IMR-90 (cell line): ENCODE measurements at regions of chr9 and their contacts with region 1.

Region 1: DNA sequence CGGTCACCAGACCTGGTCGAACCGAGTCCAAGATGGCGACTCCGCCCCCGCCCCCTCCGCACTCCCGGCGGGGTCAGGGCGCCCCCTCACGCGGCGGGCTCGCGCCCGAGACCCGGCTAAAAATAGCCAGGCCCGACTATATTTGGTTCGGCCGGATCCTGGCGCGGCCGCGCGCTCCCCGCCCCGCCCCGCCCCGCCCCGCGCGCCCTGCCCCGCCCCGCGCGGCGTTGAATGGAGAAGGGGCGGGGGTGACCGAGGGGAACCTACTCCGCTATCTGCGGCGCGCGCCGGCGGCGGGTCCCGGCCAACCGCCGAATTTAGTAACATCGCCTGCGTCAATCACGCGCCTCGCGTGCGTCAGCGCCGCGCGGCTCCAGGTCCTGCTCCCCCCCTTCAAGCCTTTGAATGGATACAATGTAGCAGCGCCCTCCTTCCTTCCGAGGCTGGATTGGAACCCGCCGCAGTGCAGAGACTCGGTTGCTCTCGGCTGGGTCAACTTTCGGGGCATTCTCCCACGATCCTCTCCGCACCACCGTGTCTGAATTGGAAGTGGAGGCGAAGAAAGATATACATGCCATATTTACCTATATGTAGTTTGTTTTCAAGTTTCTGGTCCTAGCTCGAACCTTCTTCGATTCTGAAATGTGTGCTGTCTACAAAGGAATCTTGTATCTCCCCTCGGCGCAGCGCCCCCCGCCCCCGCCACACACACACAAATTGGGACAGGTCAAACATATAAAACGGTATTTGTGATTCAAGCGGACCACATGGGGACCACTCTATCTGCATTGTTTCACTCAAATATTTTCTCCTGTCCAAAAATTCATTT is 1.6 kb upstream of the NR4A3 start:
- DNase-seq: peak; percentile 96
- ATAC-seq: peak; percentile 73
- H3K4me3 ChIP-seq: peak overlapping the region; percentile 78
- H3K27ac ChIP-seq: peak overlapping the region; percentile 91
- H3K4me1 ChIP-seq: peaks cover 6% of the 10 kb centered on the region
- H3K27me3 ChIP-seq: no peaks in the 10 kb centered on the region
- CTCF ChIP-seq: peak; percentile 24; the same call in 1 of the 2 replicates
- POLR2A ChIP-seq: peak; percentile 82; the same call in 1 of the 2 replicates
- RAD21 ChIP-seq: peak; percentile 29; the same call in 1 of the 2 replicates

Region 2: GRCh38 chr9:99162759-99163364 is 657.2 kb before region 1 on chr9:
- CTCF ChIA-PET with region 1: no interaction called
- POLR2A ChIA-PET with region 1: no interaction called
- dilution Hi-C with region 1: no loop called
- in situ Hi-C with region 1: no loop called
- intact Hi-C with region 1: loop called (anchors 5 kb)
- DNase-seq: peak; percentile 51
- ATAC-seq: peak; percentile 67
- H3K4me3 ChIP-seq: no peak overlapping the region
- H3K27ac ChIP-seq: no peak overlapping the region
- H3K4me1 ChIP-seq: no peaks in the 10 kb centered on the region; the same call in 1 of the 2 replicates
- H3K27me3 ChIP-seq: peaks cover 7% of the 10 kb centered on the region
- CTCF ChIP-seq: peak; percentile 72
- POLR2A ChIP-seq: no peak
- RAD21 ChIP-seq: peak; percentile 78

Region 3: GRCh38 chr9:99266255-99267023 is 553.6 kb before region 1 on chr9:
- CTCF ChIA-PET with region 1: no interaction called
- POLR2A ChIA-PET with region 1: no interaction called
- dilution Hi-C with region 1: no loop called
- in situ Hi-C with region 1: loop called (anchors 25 kb)
- intact Hi-C with region 1: loop called (anchors 1 kb)
- DNase-seq: peak; percentile 68
- ATAC-seq: peak; percentile 81
- H3K4me3 ChIP-seq: no peak overlapping the region
- H3K27ac ChIP-seq: no peak overlapping the region
- H3K4me1 ChIP-seq: peaks cover 2% of the 10 kb centered on the region; the same call in 1 of the 2 replicates
- H3K27me3 ChIP-seq: no peaks in the 10 kb centered on the region
- CTCF ChIP-seq: peak; percentile 84
- POLR2A ChIP-seq: 0 out of 2 replicates have a peak, but pooled peaks have one; percentile 23
- RAD21 ChIP-seq: peak; percentile 96

Region 4: DNA sequence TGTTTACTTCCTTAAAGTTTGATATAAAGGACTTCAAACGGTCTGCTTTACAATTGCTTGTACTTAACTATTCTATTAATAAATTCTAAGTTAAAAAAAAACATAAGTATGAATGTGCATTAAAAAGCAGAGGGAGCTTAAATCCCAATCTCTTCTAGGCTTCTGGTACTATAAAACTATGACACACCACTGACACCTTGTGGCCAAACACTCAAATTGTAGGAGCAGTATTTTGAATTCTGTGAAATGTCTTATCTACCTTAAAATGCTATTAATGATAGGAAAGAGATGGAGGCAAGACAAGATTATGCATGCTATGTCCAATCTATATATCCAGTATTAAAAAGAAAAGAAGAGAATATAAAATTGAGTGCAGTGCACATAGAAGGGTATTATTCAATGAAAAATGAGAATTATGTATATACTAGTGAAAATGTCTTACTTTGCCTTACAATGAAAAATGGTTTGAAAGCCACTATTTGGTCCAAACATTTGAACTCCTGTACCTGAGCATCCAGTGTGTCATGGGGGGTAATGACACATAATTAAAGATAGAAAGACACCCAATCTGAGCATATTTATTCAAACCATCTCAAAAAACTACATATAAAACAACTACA is 191.1 kb after region 1 on chr9:
- CTCF ChIA-PET with region 1: interaction called, 7 read pairs
- POLR2A ChIA-PET with region 1: no interaction called
- dilution Hi-C with region 1: no loop called
- in situ Hi-C with region 1: no loop called
- intact Hi-C with region 1: loop called (anchors 5 kb)
- DNase-seq: peak; percentile 67
- ATAC-seq: no peak
- H3K4me3 ChIP-seq: no peak overlapping the region
- H3K27ac ChIP-seq: no peak overlapping the region
- H3K4me1 ChIP-seq: peaks cover 7% of the 10 kb centered on the region
- H3K27me3 ChIP-seq: no peaks in the 10 kb centered on the region
- CTCF ChIP-seq: peak; percentile 60
- POLR2A ChIP-seq: no peak
- RAD21 ChIP-seq: peak; percentile 66

Region 5: GRCh38 chr9:100216178-100216787 is 396.2 kb after region 1 on chr9:
- CTCF ChIA-PET with region 1: no interaction called
- POLR2A ChIA-PET with region 1: no interaction called
- dilution Hi-C with region 1: no loop called
- in situ Hi-C with region 1: loop called (anchors 25 kb)
- intact Hi-C with region 1: loop called (anchors 5 kb)
- DNase-seq: peak; percentile 45
- ATAC-seq: 0 out of 2 replicates have a peak, but pooled peaks have one; percentile 22
- H3K4me3 ChIP-seq: no peak overlapping the region
- H3K27ac ChIP-seq: no peak overlapping the region
- H3K4me1 ChIP-seq: peaks cover 6% of the 10 kb centered on the region
- H3K27me3 ChIP-seq: no peaks in the 10 kb centered on the region
- CTCF ChIP-seq: peak; percentile 56
- POLR2A ChIP-seq: no peak
- RAD21 ChIP-seq: peak; percentile 63

Region 6: DNA sequence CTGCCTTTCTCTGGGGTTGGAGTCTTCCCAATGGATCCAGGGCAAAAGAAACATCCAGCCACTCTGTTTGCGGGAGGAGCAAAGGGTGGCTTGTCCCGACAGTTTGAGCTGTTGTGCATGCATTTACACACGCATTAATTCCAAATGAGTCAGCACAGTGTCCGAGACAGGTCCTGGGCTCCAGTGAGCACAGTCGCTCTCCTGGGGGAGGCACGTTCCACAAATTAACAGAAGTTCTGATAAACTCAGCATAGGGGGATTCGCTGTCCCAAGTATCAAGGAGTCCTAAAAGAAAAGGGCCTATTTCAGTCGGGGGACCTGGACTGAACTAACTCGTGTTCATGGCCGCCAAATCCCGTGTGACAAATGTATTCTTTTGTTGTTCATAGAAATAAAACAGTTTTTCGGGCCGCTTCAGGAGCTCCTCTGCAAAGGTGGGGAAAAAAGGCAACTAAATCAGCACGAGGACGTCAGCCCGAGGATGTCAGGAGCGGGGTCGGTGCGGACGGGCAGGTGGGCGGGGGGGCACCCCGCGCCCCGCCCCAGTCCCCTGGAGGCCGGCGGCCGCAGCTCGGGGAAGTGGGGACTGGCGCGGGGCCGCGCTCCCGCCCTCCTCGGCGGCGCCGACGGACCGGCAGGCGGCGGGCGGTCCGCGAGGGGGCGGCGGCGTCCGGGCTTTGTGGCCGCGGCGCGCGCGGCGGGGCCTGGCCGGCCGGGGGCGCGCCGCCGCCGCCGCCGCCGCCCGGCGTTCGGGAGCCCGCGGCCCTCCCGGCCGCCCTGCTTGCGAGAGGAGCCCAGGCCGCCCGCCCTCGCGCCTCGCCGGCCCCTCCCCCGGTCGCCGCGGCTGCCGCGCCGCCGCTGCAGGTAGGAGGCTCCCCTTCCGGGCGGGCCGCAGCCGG is 606.7 kb after region 1 on chr9 and contains the start of gene MSANTD3:
- CTCF ChIA-PET with region 1: no interaction called
- POLR2A ChIA-PET with region 1: no interaction called
- dilution Hi-C with region 1: no loop called
- in situ Hi-C with region 1: no loop called
- intact Hi-C with region 1: loop called (anchors 5 kb)
- DNase-seq: peak; percentile 76
- ATAC-seq: peak; percentile 64
- H3K4me3 ChIP-seq: peak within 1 kb of the TSS; percentile 66
- H3K27ac ChIP-seq: peak within 1 kb of the TSS; percentile 95
- H3K4me1 ChIP-seq: peaks cover 17% of the 10 kb centered on the region
- H3K27me3 ChIP-seq: no peaks in the 10 kb centered on the region
- CTCF ChIP-seq: peak; percentile 31
- POLR2A ChIP-seq: peak; percentile 90
- RAD21 ChIP-seq: no peak; the same call in 1 of the 2 replicates
- total RNA-seq, gene MSANTD3: 55.9 and 71.1 TPM in 2 replicates